Prostate gland (tissue), 2 donors: ENCODE measurements at regions of chr10 and their contacts with region 1.

Region 1: GRCh38 chr10:72215652-72216549 is at the starts of genes ANAPC16 and ASCC1:
- DNase-seq: peak; percentile 89
- H3K4me3 ChIP-seq: peak within 1 kb of the TSS; percentile 65 to 66
- H3K27ac ChIP-seq: peak within 1 kb of the TSS; percentile 97 to 99
- H3K4me1 ChIP-seq: no peaks in the 10 kb centered on the region
- H3K27me3 ChIP-seq: no peaks in the 10 kb centered on the region
- CTCF ChIP-seq: peak in 1 of 4 experiments; percentile 22
- POLR2A ChIP-seq: peak; percentile 81
- total RNA-seq, gene ANAPC16: 73.4 to 123 TPM
- total RNA-seq, gene ASCC1: 14.8 to 38.3 TPM

Region 2: GRCh38 chr10:71963756-71964668 is 251.9 kb before region 1 on chr10 and contains the start of gene CHST3:
- intact Hi-C with region 1: loop called (anchors 10 kb)
- DNase-seq: peak; percentile 41
- H3K4me3 ChIP-seq: peak within 1 kb of the TSS; percentile 61 to 65
- H3K27ac ChIP-seq: peak within 1 kb of the TSS; percentile 89 to 90
- H3K4me1 ChIP-seq: peaks cover 2% of the 10 kb centered on the region
- H3K27me3 ChIP-seq: no peaks in the 10 kb centered on the region
- CTCF ChIP-seq: no peak
- POLR2A ChIP-seq: peak; percentile 23
- total RNA-seq, gene CHST3: 16.5 to 197 TPM

Region 3: GRCh38 chr10:72058989-72059842 is 156.7 kb before region 1 on chr10:
- intact Hi-C with region 1: loop called (anchors 5 kb)
- DNase-seq: no peak
- H3K4me3 ChIP-seq: no peak overlapping the region
- H3K27ac ChIP-seq: no peak overlapping the region
- H3K4me1 ChIP-seq: no peaks in the 10 kb centered on the region
- H3K27me3 ChIP-seq: no peaks in the 10 kb centered on the region
- CTCF ChIP-seq: no peak
- POLR2A ChIP-seq: no peak

Region 4: GRCh38 chr10:72146071-72146470 is 69.8 kb before region 1 on chr10:
- intact Hi-C with region 1: no loop called
- DNase-seq: no peak
- H3K4me3 ChIP-seq: no peak overlapping the region
- H3K27ac ChIP-seq: no peak overlapping the region
- H3K4me1 ChIP-seq: no peaks in the 10 kb centered on the region
- H3K27me3 ChIP-seq: no peaks in the 10 kb centered on the region
- CTCF ChIP-seq: no peak
- POLR2A ChIP-seq: no peak

Region 5: DNA sequence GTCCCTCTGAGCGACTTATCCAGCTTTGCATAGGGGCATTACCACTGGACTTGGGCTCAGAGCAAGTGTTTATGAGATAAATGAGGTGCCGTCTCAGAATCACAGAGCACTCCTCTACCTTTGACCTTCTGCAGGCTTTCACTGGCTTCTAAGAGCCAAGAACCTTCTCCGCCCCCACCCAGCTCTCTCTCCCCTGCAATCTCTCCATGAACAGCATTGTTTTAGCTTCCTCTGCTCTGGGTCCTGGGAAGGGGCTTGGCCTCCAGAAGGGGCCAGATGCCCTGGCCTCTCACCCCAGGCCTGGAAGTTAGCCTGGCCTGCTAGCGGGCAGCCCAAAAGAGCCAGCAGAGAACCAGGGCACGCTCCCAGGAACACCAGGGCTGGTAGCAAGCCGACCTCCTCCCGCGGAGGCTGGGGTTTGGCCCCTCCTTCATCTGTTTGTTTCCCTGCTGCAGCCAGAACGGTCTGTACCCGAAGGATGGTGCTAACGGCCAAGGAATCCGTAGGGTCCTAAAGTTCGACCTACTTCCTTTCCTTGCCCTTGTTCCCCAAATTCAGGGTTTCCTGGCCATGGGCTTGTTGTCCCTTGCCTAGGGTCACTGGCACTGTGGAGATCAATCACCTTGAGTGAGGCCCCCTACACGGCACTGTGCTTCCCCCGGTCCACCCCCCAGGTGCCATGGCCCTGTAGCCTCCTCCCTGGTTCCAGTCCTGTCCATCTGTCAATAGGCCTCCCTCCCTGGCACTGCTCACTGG is 39.1 kb after region 1 on chr10:
- intact Hi-C with region 1: loop called (anchors 5 kb)
- DNase-seq: peak; percentile 94
- H3K4me3 ChIP-seq: no peak overlapping the region
- H3K27ac ChIP-seq: peak overlapping the region; percentile 88 to 91
- H3K4me1 ChIP-seq: peaks cover 32% of the 10 kb centered on the region
- H3K27me3 ChIP-seq: no peaks in the 10 kb centered on the region
- CTCF ChIP-seq: peak in 1 of 4 experiments; percentile 11
- POLR2A ChIP-seq: peak; percentile 55

Region 6: DNA sequence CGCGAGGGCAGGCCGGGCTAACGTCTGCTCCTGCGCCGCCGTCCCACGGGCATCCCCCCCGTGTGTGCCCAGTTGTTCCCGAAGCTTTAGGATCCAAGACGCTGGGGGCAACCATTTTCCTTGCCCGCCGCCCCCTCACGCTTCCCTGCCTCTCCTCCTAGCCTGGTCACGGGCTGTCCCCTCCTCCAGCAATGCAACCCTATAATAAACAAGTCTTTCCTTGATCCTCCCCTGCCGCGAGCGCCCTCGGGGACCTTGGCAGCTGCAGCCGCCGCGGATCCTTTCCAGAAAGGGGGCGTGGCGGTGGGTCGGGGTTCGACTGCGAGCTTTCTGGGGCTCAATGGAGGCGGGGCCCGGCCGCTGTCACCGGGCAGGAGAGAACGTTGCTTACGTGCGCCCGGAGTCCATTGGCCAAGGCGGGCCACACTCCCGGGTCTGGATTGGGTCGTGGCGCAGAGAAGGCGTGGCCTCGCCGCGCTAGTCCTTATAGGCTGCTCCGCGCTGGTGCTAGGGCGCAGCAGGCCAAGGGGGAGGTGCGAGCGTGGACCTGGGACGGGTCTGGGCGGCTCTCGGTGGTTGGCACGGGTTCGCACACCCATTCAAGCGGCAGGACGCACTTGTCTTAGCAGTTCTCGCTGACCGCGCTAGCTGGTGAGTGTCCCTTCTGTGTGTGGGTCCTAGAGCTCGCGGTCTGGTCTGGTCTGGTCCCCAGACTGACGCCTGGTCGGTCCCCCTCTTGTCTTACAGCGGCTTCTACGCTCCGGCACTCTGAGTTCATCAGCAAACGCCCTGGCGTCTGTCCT is 57.7 kb after region 1 on chr10 and contains the start of gene DDIT4:
- intact Hi-C with region 1: loop called (anchors 2 kb)
- DNase-seq: peak; percentile 99
- H3K4me3 ChIP-seq: peak within 1 kb of the TSS; percentile 71 to 76
- H3K27ac ChIP-seq: peak within 1 kb of the TSS; percentile 97 to 98
- H3K4me1 ChIP-seq: no peaks in the 10 kb centered on the region
- H3K27me3 ChIP-seq: no peaks in the 10 kb centered on the region
- CTCF ChIP-seq: peak in 2 of 4 experiments; percentile 35
- POLR2A ChIP-seq: peak; percentile 100
- total RNA-seq, gene DDIT4: 259 to 265 TPM

Region 7: DNA sequence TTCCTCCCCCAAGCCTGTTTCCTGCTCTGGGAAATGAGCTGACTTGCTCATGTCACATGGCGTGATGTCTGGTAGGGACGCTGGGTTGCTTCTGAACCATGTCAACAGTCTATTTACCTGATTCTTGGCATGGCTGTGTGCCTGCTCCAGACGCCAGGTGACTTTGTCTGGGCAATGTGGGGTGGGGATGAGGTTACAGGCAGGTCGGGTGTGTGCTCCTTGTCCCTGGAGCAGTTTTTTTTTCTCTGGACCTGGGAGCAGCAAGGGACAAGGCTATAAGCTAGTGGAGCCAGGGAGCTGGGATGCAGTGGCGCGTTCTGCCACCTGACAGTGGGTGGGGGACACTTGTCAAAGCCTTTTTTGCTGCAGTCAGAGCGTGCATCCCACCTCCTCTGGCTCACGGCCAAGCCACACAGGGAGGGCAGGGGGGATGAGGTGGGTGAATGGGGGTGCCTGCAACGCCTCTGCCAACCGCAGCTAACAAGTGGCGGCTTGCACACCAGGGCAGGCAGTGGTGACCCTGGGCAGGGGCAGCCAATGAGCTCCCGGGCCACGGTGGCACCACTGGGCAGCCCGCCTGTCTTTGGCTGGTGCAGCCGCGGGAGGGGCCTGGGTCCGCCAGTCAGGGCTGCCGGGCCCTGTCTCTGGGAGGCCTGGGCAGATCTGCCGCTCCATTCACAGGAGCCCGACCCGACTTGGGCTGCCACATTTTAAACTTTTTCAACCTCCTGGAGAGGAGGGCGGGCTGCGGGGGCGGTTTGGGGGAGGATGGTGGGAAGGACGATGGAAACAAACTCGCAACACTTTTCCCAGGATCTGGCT is 115.9 kb after region 1 on chr10:
- intact Hi-C with region 1: loop called (anchors 5 kb)
- DNase-seq: peak; percentile 95
- H3K4me3 ChIP-seq: no peak overlapping the region
- H3K27ac ChIP-seq: peak overlapping the region; percentile 86 to 87
- H3K4me1 ChIP-seq: peaks cover 43% of the 10 kb centered on the region
- H3K27me3 ChIP-seq: no peaks in the 10 kb centered on the region
- CTCF ChIP-seq: peak in 3 of 4 experiments; percentile 16 to 64 (median 40)
- POLR2A ChIP-seq: peak; percentile 51